Right cardiac atrium (tissue), 5 donors: ENCODE measurements at regions of chr19 and their contacts with region 1.

Region 1: DNA sequence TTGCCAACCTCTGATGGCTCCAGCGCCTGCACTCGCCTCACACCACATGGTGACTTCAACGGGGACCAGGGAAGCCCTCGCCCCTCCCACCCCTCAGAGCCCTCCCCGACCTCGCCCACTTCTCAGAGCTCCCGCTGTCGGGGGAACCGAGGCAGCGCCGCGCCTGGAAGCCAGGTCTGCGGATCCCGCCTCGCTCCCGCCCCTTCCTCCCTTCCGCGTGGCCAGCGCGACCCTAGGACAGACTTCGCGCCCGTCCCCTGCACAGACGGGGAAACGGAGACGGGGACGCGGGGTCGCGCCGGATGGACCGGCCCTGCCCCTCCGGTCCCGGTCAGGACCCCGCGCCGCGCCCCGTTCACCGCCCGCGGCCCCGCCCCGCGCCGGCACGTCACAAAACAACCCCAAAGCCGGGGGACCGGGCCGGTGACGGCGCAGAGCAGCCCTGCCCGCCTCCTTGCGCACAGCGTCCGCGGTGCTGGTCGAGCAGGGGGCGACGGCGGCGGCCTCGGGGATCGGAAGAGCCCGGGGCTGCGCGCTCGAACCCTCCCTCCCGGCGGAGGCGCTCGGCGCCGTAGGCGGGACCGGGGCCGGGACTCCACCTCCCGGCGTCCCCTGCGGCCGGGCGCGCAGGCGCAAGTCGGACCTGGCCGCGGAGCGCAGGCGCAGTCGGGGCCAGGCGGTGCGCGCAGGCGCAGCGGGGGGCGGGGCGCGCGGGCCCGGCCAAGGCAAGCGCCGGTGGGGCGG is 379 bp upstream of the CDC34 start:
- DNase-seq: peak; percentile 84 to 96 (median 95)
- ATAC-seq: peak; percentile 67 to 80
- H3K4me3 ChIP-seq: peak overlapping the region; percentile 98
- H3K27ac ChIP-seq: peak overlapping the region; percentile 92
- H3K4me1 ChIP-seq: peaks cover 9% of the 10 kb centered on the region
- H3K27me3 ChIP-seq: no peaks in the 10 kb centered on the region

Region 2: DNA sequence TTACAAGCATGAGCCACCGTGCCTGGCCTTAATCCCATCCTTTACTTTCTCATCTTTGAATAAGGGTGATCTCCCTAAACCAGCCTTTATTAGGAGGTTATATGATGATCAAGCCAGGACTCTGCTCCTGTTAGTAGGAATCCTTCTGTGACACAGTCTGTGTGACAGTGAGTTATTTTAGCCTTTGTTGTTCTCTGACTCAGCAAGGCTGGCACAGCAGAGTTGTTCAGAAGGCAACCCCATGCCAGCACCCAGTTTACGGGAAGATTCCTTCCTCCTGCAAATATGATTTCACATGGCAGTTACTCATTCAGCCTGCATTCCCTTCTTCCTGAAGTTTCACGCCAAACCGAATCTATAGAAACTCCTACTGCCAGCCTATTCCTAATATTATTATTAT is 176.0 kb before region 1 on chr19:
- intact Hi-C with region 1: no loop called
- DNase-seq: no peak
- ATAC-seq: no peak
- H3K4me3 ChIP-seq: no peak overlapping the region
- H3K27ac ChIP-seq: no peak overlapping the region
- H3K4me1 ChIP-seq: no peaks in the 10 kb centered on the region
- H3K27me3 ChIP-seq: no peaks in the 10 kb centered on the region

Region 3: GRCh38 chr19:572140-572742 is 41.1 kb after region 1 on chr19 and contains the start of gene BSG:
- intact Hi-C with region 1: loop called in 2 of 4 experiments (anchors 5 kb)
- DNase-seq: peak; percentile 99 to 100 (median 99)
- ATAC-seq: peak; percentile 79 to 86
- H3K4me3 ChIP-seq: peak within 1 kb of the TSS; percentile 91
- H3K27ac ChIP-seq: peak within 1 kb of the TSS; percentile 90
- H3K4me1 ChIP-seq: peaks cover 2% of the 10 kb centered on the region
- H3K27me3 ChIP-seq: no peaks in the 10 kb centered on the region
- total RNA-seq, gene BSG: 1,142 to 1,510 (median 1,274) TPM

Region 4: DNA sequence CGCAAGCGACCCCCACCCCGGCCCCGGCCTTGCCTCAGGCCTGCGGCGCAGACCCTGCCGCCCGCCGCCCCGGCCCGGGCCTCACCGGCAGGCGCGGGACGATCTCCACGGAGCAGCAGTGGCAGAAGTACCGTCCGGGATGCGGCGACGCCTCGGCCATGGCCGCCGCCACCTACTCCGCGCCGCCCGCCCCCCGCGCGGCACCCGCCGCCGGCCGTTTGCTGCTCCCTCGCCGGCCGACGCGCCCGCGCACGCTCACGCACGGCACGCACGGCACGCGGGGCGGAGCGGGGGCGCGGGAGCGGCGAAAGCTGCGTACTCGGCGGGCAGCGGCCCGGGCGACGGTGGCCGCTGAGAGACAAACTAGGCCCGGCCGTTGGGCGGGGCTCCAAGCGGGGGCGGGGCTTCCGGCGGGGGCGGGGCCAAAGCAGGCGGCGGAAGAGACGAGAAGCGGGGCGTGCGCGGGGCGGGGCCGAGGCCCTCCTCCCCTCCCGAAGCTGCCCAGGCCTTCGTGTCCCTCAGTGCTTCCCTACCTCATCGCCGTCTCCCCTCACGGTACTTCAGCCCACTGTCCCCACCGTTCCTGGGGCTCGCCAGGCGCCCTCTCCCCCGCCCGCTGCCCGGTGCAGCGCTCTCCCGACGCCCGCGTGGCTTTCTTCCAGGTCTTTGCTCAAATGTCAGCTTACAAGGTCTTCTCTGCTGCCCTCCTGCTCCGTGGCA is 131.9 kb after region 1 on chr19 and contains the start of gene RNF126:
- intact Hi-C with region 1: loop called in 1 of 4 experiments (anchors 5 kb)
- DNase-seq: peak; percentile 92 to 98 (median 97)
- ATAC-seq: peak; percentile 77 to 85
- H3K4me3 ChIP-seq: peak within 1 kb of the TSS; percentile 94
- H3K27ac ChIP-seq: peak within 1 kb of the TSS; percentile 96
- H3K4me1 ChIP-seq: peaks cover 9% of the 10 kb centered on the region
- H3K27me3 ChIP-seq: no peaks in the 10 kb centered on the region
- total RNA-seq, gene RNF126: 21.7 to 37.6 (median 28.0) TPM